Activated naive CD4-positive, alpha-beta T cell treated with anti-CD3 and anti-CD28 coated beads for 36 hours (primary cell): ENCODE measurements at regions of chr7 and their contacts with region 1.

Region 1: GRCh38 chr7:37448636-37449361 is at the start of gene ELMO1:
- DNase-seq: peak; percentile 81
- H3K4me3 Mint-ChIP-seq: peak within 1 kb of the TSS; percentile 94
- H3K27ac Mint-ChIP-seq: peak within 1 kb of the TSS; percentile 95
- H3K4me1 Mint-ChIP-seq: peaks cover 45% of the 10 kb centered on the region
- H3K27me3 Mint-ChIP-seq: no peaks in the 10 kb centered on the region
- total RNA-seq, gene ELMO1: 129 to 137 TPM

Region 2: DNA sequence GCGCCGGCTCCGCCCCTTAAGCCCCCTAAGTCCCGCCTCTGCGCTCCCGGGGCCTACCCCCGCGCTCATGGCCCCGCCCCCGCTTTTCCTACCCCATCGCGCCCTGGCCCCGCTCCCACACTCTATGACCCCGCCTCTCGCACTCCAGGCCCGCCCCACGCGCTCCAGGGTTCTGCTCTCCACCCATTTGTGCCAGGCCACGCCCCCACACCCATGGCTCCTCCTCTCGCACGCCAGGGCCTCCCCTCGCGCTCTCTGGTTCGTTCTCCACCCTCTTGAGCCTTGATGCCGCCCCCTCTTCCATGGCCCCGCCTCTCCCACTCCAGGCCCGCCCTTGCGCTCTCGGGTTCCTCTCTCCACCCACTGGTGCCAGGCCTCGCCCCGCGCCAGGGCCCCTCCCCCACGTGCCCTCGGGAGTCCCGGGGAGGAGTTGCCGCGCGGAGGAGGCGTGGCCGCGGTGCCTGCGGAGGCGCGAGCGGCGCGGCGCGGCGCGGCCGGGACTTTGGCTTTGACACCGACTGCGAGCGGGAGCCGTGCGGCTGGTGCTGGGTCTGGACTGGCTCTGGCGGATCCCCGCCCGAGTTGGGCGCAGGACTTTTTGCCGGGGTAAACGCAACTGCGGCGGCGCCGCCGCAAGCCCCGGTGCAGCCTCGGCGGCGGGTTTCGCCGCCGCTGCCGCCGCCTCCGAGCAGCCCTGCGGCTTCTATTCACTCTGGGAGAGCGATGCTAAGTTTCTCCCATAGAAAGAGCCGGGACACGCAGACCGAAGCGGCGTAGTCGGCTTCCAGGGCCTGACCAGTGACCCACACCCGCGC is 1295.8 kb before region 1 on chr7 and contains the start of gene EEPD1:
- CTCF ChIA-PET with region 1: no interaction called
- intact Hi-C with region 1: loop called (anchors 10 kb)
- DNase-seq: peak; percentile 100
- H3K4me3 Mint-ChIP-seq: peak within 1 kb of the TSS; percentile 72
- H3K27ac Mint-ChIP-seq: no peak within 1 kb of the TSS
- H3K4me1 Mint-ChIP-seq: peaks cover 18% of the 10 kb centered on the region
- H3K27me3 Mint-ChIP-seq: no peaks in the 10 kb centered on the region
- total RNA-seq, gene EEPD1: 0.49 to 0.50 TPM

Region 3: GRCh38 chr7:37208528-37208927 is 240.3 kb before region 1 on chr7:
- CTCF ChIA-PET with region 1: no interaction called
- intact Hi-C with region 1: loop called (anchors 2 kb)
- DNase-seq: peak; percentile 52
- H3K4me3 Mint-ChIP-seq: no peak overlapping the region
- H3K27ac Mint-ChIP-seq: peak overlapping the region; percentile 56
- H3K4me1 Mint-ChIP-seq: peaks cover 23% of the 10 kb centered on the region
- H3K27me3 Mint-ChIP-seq: no peaks in the 10 kb centered on the region

Region 4: GRCh38 chr7:37275078-37275710 is 173.6 kb before region 1 on chr7:
- CTCF ChIA-PET with region 1: no interaction called
- intact Hi-C with region 1: no loop called
- DNase-seq: no peak
- H3K4me3 Mint-ChIP-seq: no peak overlapping the region
- H3K27ac Mint-ChIP-seq: no peak overlapping the region
- H3K4me1 Mint-ChIP-seq: peaks cover 49% of the 10 kb centered on the region
- H3K27me3 Mint-ChIP-seq: no peaks in the 10 kb centered on the region

Region 5: GRCh38 chr7:37365405-37365804 is 83.4 kb before region 1 on chr7:
- CTCF ChIA-PET with region 1: interaction called, 7 read pairs
- intact Hi-C with region 1: loop called (anchors 1 kb)
- DNase-seq: no peak
- H3K4me3 Mint-ChIP-seq: peak overlapping the region; percentile 15
- H3K27ac Mint-ChIP-seq: peak overlapping the region; percentile 99
- H3K4me1 Mint-ChIP-seq: peaks cover 88% of the 10 kb centered on the region
- H3K27me3 Mint-ChIP-seq: no peaks in the 10 kb centered on the region

Region 6: DNA sequence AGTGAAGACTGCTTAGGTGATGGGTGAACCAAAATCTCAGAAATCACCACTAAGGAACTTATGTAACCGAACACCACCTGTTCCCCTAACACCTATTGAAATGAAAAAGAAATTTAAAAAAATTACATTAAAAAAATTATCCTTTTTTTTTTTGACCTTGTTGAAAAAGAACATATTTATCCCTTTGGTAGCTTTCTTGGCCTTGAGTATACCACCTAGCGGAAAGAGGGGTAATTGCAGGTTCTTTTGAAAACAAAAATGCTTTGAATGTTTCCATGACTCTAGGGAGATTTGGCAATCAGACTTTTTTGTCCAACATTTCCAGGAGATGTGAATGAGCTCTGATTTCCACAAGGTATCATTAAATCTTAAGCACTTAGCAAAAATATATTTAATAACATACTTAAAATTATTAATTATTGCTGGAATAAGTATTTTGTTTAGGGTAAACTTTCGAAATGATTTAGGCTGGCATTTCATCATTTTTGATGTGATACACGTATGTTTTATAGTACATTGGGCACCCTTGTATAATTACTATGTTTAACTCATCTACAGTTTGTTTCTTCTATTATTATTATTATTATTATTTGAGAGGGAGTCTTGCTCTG is 46.9 kb after region 1 on chr7:
- CTCF ChIA-PET with region 1: interaction called, 13 read pairs
- intact Hi-C with region 1: loop called (anchors 1 kb)
- DNase-seq: no peak
- H3K4me3 Mint-ChIP-seq: no peak overlapping the region
- H3K27ac Mint-ChIP-seq: no peak overlapping the region
- H3K4me1 Mint-ChIP-seq: peaks cover 8% of the 10 kb centered on the region
- H3K27me3 Mint-ChIP-seq: no peaks in the 10 kb centered on the region

Region 7: DNA sequence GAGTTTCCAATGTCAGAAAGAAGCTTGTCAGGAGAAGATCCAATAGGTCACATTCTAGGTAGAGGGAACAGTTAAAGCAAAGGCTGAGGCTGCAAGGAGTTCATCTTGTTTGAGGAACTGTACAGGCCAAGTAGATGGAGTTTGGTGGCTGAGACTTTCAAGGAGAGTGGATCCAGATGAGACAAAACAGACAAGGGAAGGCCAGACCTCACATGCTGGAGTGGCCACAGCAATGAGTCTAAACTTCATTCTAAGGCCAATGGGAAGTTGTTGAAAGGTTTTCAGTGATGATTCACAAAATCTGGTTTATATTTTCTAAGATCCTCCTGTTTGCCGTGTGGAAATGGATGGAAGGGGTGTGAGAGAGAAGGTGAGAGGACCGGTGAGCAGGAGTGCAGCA is 511.7 kb after region 1 on chr7:
- CTCF ChIA-PET with region 1: no interaction called
- intact Hi-C with region 1: no loop called
- DNase-seq: no peak
- H3K4me3 Mint-ChIP-seq: no peak overlapping the region
- H3K27ac Mint-ChIP-seq: no peak overlapping the region
- H3K4me1 Mint-ChIP-seq: no peaks in the 10 kb centered on the region
- H3K27me3 Mint-ChIP-seq: no peaks in the 10 kb centered on the region

Region 8: DNA sequence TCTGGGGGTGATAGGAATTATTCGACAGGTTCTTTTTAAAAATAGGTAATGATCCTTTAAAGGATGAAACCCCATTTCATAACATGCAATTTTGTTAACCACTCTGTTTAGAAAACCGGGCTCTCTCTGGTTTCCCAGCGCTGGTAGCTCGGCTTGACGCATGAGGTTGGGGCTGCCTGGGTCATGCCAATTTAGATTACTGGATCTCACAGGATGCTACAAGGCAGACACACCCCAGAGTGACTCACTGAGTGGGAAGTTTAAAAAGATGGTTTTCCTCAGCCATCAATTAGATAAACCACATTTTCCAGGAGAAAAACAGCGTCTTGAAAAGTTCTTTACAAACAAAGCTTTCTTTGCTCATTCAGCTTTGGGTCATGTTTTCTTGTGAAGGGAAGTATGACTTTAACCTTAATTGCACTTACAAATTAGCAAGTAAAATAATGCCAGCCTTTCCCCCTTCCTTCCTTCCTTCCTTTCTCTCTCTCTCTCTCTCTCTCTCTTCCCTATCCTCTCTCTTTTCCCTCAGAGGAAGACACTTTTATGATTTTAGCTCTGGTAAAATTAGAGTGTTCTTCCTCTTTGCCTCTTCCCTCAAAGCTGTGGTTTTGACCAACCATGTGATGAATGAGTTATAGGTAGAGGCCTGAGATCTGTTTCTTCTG is 571.5 kb after region 1 on chr7:
- CTCF ChIA-PET with region 1: no interaction called
- intact Hi-C with region 1: no loop called
- DNase-seq: no peak
- H3K4me3 Mint-ChIP-seq: no peak overlapping the region
- H3K27ac Mint-ChIP-seq: no peak overlapping the region
- H3K4me1 Mint-ChIP-seq: no peaks in the 10 kb centered on the region
- H3K27me3 Mint-ChIP-seq: peaks cover 16% of the 10 kb centered on the region

Region 9: DNA sequence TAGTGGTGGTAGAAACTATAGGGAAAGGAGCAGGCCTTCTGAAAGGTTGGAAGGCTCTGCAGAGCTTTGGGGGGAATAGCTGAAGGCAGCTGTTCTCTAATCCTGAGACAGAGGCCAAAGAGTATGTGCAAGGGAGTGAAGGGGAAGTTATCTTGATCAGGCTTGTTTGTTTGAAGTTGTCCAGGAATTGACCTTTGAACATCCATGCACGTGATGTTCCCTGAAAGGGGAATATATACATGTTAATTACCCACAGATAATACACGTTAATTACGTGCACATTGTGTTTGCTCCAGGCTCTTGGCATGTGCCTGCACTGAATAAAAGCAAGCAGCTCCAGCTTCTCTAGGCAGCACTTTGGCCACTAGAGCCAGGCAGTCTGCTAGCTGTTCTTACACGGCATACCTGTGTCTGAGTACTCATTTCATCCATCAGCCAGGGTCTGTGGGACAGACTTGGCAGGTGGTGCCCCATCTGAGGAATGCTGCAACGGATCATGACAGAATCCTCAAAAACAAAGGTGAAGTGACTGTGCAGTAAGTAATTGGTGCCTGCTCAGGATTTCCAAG is 711.3 kb after region 1 on chr7:
- CTCF ChIA-PET with region 1: no interaction called
- intact Hi-C with region 1: no loop called
- DNase-seq: no peak
- H3K4me3 Mint-ChIP-seq: no peak overlapping the region
- H3K27ac Mint-ChIP-seq: no peak overlapping the region
- H3K4me1 Mint-ChIP-seq: no peaks in the 10 kb centered on the region
- H3K27me3 Mint-ChIP-seq: peaks cover 4% of the 10 kb centered on the region